SK-N-SH (cell line): ENCODE measurements at regions of chr5 and their contacts with region 1.

Region 1: GRCh38 chr5:139684881-139685749 is 37.0 kb downstream of the CXXC5 start:
- DNase-seq: peak; percentile 76
- H3K4me3 ChIP-seq: no peak overlapping the region
- H3K27ac ChIP-seq: peak overlapping the region in 1 of 2 experiments; percentile 48; a peak in 1 of 4 replicates
- H3K4me1 ChIP-seq: peaks cover 18 to 59% of the 10 kb centered on the region in 2 experiments
- H3K27me3 ChIP-seq: no peaks in the 10 kb centered on the region
- CTCF ChIP-seq: peak; percentile 34
- EP300 ChIP-seq: no peak
- RAD21 ChIP-seq: peak; percentile 31

Region 2: GRCh38 chr5:139287890-139288635 is 397.1 kb before region 1 on chr5:
- CTCF ChIA-PET with region 1: no interaction called
- POLR2A ChIA-PET with region 1: no interaction called
- DNase-seq: no peak
- H3K4me3 ChIP-seq: no peak overlapping the region
- H3K27ac ChIP-seq: no peak overlapping the region
- H3K4me1 ChIP-seq: peaks cover 0 to 1% of the 10 kb centered on the region in 2 experiments; a peak in 1 of 4 replicates
- H3K27me3 ChIP-seq: no peaks in the 10 kb centered on the region
- CTCF ChIP-seq: no peak; the same call in 1 of the 2 replicates
- EP300 ChIP-seq: no peak
- RAD21 ChIP-seq: peak; percentile 56

Region 3: DNA sequence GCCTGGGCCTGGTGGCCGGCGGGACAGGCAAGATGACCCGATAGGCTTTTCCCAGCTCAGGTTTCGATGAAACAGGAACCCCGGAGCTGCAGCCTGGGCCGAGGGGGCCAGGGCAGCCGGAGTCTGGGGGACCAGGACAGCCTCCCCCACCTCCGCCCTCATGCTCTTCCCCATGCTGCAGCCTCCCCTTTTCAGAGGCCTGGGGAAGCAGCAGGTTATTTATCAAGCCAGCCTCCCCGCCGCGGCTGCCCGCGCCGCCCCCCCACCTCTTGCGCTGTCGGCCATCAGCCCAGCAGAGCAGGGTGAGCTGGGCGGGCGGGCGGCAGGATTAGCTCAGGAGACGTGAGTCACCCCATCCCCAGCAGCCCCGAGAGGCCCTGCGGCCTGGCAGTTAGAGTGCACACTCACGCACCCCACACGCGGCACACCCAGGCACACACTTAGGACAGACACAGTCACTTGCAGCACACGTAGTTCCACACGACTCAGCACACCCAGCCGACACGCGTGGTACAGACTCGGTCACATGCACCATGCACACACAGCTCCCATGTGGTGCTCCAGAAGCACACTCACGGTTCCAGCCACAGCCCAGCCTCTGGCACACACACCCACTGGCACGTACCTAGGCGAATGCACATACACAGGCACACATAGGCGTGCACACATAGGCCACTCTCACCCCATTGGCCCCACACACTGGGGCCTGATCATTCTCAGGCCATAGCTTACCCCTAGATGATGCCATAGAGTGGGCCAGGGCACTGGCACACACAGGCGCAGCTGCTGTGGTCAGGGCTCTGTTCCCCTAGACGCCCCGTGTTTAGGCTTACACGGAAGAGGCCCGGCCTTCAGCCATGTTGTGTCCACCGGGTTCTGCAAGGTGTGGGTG is 23.9 kb before region 1 on chr5:
- CTCF ChIA-PET with region 1: interaction called, 32 read pairs
- POLR2A ChIA-PET with region 1: interaction called, 7 read pairs
- DNase-seq: peak; percentile 84
- H3K4me3 ChIP-seq: no peak overlapping the region
- H3K27ac ChIP-seq: peak overlapping the region; percentile 96 to 99
- H3K4me1 ChIP-seq: peaks cover 76 to 96% of the 10 kb centered on the region in 2 experiments
- H3K27me3 ChIP-seq: no peaks in the 10 kb centered on the region
- CTCF ChIP-seq: no peak
- EP300 ChIP-seq: peak in 1 of 2 experiments; percentile 69; a peak in 2 of 4 replicates
- RAD21 ChIP-seq: no peak

Region 4: DNA sequence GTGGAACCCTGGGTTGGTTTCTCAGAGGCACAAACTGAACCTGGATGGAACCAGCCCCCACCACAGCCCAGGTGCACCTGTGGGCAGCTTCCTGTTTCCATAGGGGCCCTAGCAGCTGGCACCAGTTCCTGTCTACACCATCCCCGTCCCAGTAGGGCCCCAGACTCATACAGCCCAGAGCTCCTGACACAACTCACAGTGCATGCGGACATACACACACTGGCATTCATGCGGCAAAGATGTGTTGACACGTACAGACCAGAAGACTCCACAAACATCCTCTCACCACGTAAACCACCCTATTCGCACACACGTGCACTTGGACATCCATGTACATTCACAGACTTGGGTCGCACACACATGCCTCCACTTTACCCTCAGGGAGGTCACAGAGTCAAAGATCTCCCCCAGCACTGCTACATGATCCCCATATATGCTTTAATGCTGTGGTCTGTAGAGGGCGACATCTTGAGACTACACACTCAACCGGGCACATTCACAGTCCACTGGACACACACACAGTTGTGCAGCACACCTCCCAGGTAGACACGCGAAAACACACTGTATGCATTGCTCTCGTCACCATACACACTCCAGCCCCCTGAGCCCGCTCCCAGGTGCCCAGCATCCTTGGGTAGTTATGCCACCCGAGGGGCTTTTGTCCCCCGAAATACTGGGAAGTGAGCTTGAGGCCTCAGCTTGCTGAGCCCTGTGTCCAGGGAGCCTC is 14.6 kb before region 1 on chr5:
- CTCF ChIA-PET with region 1: interaction called, 42 read pairs
- POLR2A ChIA-PET with region 1: interaction called, 4 read pairs
- DNase-seq: peak; percentile 59
- H3K4me3 ChIP-seq: no peak overlapping the region
- H3K27ac ChIP-seq: peak overlapping the region; percentile 26 to 99; a peak in 3 of 4 replicates
- H3K4me1 ChIP-seq: peaks cover 56 to 92% of the 10 kb centered on the region in 2 experiments
- H3K27me3 ChIP-seq: no peaks in the 10 kb centered on the region
- CTCF ChIP-seq: peak; percentile 43
- EP300 ChIP-seq: no peak
- RAD21 ChIP-seq: peak; percentile 32; the same call in 1 of the 2 replicates